Activated CD4-positive, alpha-beta T cell treated with anti-CD3 and anti-CD28 coated beads for 36 hours (primary cell): ENCODE measurements at regions of chr2 and their contacts with region 1.

Region 1: GRCh38 chr2:143110758-143111428 is 18.3 kb upstream of the ARHGAP15 start:
- DNase-seq: peak; percentile 79
- ATAC-seq: peak; percentile 83
- H3K4me3 Mint-ChIP-seq: peak overlapping the region; percentile 42
- H3K27ac Mint-ChIP-seq: peak overlapping the region; percentile 87
- H3K4me1 Mint-ChIP-seq: peaks cover 42% of the 10 kb centered on the region
- H3K27me3 Mint-ChIP-seq: no peaks in the 10 kb centered on the region

Region 2: DNA sequence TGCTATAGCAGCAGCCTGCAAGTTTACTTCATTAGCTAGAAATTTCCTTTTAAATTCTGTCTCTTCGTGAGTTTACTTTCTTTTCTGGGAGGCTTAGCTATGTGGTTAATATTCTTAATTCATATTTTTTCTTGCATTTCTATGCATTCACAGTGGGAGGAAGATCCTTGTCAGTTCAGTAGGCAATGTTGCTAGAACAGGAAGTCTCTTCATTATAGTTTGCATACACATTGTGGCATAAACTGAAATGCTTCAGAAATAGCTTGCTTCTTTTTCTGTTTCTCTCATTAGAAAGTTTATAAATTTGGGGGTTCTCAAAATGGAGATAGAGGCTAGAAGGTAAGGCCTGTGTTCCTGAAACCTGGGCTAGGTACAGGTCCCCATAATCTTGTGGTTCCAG is 10.2 kb after region 1 on chr2:
- CTCF ChIA-PET with region 1: interaction called, 49 read pairs
- POLR2A ChIA-PET with region 1: no interaction called
- intact Hi-C with region 1: no loop called
- DNase-seq: no peak
- ATAC-seq: no peak
- H3K4me3 Mint-ChIP-seq: peak overlapping the region; percentile 35
- H3K27ac Mint-ChIP-seq: no peak overlapping the region
- H3K4me1 Mint-ChIP-seq: peaks cover 42% of the 10 kb centered on the region
- H3K27me3 Mint-ChIP-seq: no peaks in the 10 kb centered on the region

Region 3: GRCh38 chr2:143150287-143150686 is 39.4 kb after region 1 on chr2:
- CTCF ChIA-PET with region 1: interaction called, 5 read pairs
- POLR2A ChIA-PET with region 1: no interaction called
- intact Hi-C with region 1: loop called in 1 of 2 experiments (anchors 2 kb)
- DNase-seq: no peak
- ATAC-seq: peak; percentile 39
- H3K4me3 Mint-ChIP-seq: peak overlapping the region; percentile 44
- H3K27ac Mint-ChIP-seq: peak overlapping the region; percentile 91
- H3K4me1 Mint-ChIP-seq: peaks cover 83% of the 10 kb centered on the region
- H3K27me3 Mint-ChIP-seq: no peaks in the 10 kb centered on the region

Region 4: DNA sequence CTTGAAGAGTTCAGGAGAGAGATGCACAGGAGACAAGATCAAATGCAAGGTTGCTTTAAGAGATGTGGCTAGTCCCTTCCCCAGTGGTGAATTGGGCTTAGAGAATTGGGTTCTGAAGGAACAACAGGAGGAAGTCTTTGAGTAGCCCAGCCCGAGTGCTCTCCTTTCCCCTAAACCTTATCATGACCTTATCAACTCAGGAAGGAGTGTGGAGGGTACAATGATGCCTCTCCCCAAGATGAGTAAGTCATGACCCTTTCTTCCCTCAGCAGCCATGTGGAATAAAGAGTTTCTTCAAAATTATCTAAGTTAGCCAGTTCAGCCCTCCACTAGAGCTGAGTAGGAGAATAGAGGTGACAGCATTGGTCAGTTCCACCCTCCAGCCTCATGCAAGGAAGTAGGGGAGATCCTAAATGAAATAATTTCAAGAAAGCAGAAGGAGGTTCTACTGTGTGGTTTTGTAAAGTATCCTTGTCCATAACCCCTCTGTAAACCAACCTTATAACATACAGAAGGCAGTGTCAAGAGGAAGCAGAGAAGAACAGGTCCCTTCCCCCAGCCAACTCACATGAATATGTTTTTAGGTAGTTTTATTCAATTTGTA is 106.7 kb after region 1 on chr2:
- CTCF ChIA-PET with region 1: interaction called, 90 read pairs
- POLR2A ChIA-PET with region 1: no interaction called
- intact Hi-C with region 1: loop called (anchors 1 kb)
- DNase-seq: no peak
- ATAC-seq: peak; percentile 36
- H3K4me3 Mint-ChIP-seq: no peak overlapping the region
- H3K27ac Mint-ChIP-seq: peak overlapping the region; percentile 40
- H3K4me1 Mint-ChIP-seq: peaks cover 32% of the 10 kb centered on the region
- H3K27me3 Mint-ChIP-seq: no peaks in the 10 kb centered on the region

Region 5: DNA sequence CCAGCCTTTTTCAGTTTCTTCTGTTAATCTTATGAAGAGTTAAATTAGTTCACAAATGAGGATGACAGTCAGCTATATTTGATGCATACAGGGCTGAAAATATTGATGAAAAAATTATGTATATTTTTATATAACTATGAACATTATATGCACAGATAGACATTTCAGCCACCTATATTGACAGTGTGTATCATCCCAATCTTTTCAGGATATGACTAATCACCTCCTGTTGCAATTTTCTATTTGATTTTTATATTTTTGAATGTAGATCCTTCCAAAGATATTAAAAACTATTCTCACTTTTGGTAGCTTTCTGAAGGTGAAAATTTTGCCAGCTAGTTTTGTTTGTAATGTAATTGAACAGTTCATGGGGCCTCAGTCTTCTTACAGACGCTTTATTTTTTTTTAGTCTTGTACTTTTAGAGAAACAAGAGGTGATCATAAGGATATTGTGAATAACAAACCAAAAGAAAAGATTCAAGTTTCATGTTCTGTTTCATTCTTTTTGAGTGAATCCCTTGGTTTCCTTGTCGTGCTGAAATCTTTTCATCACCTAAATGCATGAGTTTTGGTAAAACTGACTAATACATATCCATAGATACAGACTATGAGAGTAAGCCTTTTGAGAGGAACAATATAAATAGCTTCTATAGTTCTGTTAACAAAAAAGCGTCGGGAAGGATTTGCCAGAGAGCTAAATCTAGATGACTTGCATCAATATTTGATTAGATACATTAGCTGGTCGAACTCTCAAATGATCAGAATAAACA is 141.4 kb after region 1 on chr2:
- CTCF ChIA-PET with region 1: interaction called, 120 read pairs
- POLR2A ChIA-PET with region 1: no interaction called
- intact Hi-C with region 1: no loop called
- DNase-seq: no peak
- ATAC-seq: peak; percentile 46
- H3K4me3 Mint-ChIP-seq: peak overlapping the region; percentile 49
- H3K27ac Mint-ChIP-seq: peak overlapping the region; percentile 76
- H3K4me1 Mint-ChIP-seq: peaks cover 65% of the 10 kb centered on the region
- H3K27me3 Mint-ChIP-seq: no peaks in the 10 kb centered on the region

Region 6: GRCh38 chr2:143468341-143468888 is 357.5 kb after region 1 on chr2:
- CTCF ChIA-PET with region 1: no interaction called
- POLR2A ChIA-PET with region 1: no interaction called
- intact Hi-C with region 1: loop called in 1 of 2 experiments (anchors 10 kb)
- DNase-seq: no peak
- ATAC-seq: peak; percentile 83
- H3K4me3 Mint-ChIP-seq: no peak overlapping the region
- H3K27ac Mint-ChIP-seq: peak overlapping the region; percentile 52
- H3K4me1 Mint-ChIP-seq: peaks cover 39% of the 10 kb centered on the region
- H3K27me3 Mint-ChIP-seq: no peaks in the 10 kb centered on the region